K562 (cell line): ENCODE measurements at regions of chr1 and their contacts with region 1.

Region 1: DNA sequence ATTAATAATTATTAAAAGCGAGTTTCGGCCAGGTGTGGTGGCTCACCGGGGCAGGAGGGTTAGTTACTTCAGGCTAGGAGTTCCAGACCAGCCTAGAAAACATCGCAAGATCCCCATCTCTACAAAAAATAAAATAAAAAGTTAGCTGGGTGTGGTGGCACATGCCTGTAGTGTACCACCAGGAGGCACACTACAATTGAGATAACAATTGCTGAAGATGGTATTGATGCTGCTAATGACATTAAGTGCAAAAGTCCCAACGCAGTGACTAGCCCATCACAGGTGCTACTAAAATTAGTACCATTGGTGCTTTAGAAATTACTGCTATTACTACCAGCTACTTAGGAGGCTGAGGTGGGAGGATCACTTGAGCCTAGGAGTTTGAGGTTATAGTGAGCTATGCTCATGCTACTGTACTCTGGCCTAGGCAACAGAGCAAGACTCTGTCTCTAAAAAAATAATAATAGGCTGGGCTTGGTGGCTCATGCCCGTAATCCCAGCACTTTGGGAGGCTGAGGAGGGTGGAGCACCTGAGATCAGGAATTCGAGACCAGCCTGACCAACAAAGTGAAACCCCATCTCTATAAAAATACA is 156.6 kb downstream of the GREM2 start:
- DNase-seq: no peak
- ATAC-seq: no peak
- H3K4me3 ChIP-seq: no peak overlapping the region
- H3K27ac ChIP-seq: no peak overlapping the region
- H3K4me1 ChIP-seq: no peaks in the 10 kb centered on the region
- H3K27me3 ChIP-seq: no peaks in the 10 kb centered on the region
- CTCF ChIP-seq: peak; percentile 8 to 30 (median 29); a peak in 2 of 6 replicates
- EP300 ChIP-seq: no peak
- POLR2A ChIP-seq: no peak
- RAD21 ChIP-seq: peak; percentile 31 to 56; a peak in 3 of 4 replicates

Region 2: DNA sequence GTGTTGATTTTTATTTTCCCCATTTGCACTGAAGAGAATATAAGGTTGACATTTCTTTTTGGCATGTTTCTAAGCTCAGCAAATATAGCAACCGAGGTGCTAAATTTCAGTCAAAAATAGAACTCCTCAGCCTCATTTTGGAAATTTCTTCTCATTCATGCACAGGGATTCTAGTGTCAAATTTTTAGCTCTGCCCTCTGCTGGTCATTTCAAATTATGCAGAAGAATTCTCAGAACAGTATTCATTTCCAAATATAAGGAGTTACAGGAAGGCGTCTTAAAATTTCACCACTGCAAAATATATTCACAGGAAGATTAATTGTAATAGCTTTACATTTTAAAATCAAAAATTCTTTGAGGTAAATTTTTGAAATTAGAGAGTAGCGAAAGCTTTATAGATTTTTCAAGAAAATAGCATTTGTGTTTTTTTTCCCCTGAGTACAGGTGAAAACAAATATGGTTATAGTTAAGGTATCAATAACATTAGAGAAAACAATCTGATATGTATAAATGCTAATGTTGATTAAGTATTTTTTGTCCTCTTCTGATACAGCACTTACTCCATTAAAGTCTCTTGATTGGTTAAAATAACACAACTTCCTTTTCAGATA is 305.7 kb before region 1 on chr1:
- CTCF ChIA-PET with region 1: no interaction called
- POLR2A ChIA-PET with region 1: no interaction called
- in situ Hi-C with region 1: no loop called
- intact Hi-C with region 1: no loop called
- DNase-seq: peak; percentile 9 to 37 (median 32)
- ATAC-seq: peak; percentile 73
- H3K4me3 ChIP-seq: no peak overlapping the region
- H3K27ac ChIP-seq: no peak overlapping the region
- H3K4me1 ChIP-seq: no peaks in the 10 kb centered on the region
- H3K27me3 ChIP-seq: no peaks in the 10 kb centered on the region
- CTCF ChIP-seq: peak; percentile 22 to 60 (median 47); a peak in 5 of 6 replicates
- EP300 ChIP-seq: no peak
- POLR2A ChIP-seq: no peak
- RAD21 ChIP-seq: peak in 1 of 2 experiments; percentile 41; a peak in 1 of 4 replicates

Region 3: GRCh38 chr1:240492832-240493440 is 37.6 kb after region 1 on chr1:
- CTCF ChIA-PET with region 1: no interaction called
- POLR2A ChIA-PET with region 1: no interaction called
- in situ Hi-C with region 1: no loop called
- intact Hi-C with region 1: loop called (anchors 2 kb)
- DNase-seq: peak; percentile 32 to 51 (median 34)
- ATAC-seq: peak; percentile 89
- H3K4me3 ChIP-seq: peak overlapping the region; percentile 18
- H3K27ac ChIP-seq: no peak overlapping the region
- H3K4me1 ChIP-seq: peaks cover 0 to 10% of the 10 kb centered on the region in 2 experiments; a peak in 2 of 5 replicates
- H3K27me3 ChIP-seq: no peaks in the 10 kb centered on the region
- CTCF ChIP-seq: peak; percentile 19 to 36 (median 34); a peak in 2 of 6 replicates
- EP300 ChIP-seq: no peak
- POLR2A ChIP-seq: no peak
- RAD21 ChIP-seq: peak; percentile 32 to 36